ENCODE measurements at regions of chr21 and their contacts with region 1.

Region 1: DNA sequence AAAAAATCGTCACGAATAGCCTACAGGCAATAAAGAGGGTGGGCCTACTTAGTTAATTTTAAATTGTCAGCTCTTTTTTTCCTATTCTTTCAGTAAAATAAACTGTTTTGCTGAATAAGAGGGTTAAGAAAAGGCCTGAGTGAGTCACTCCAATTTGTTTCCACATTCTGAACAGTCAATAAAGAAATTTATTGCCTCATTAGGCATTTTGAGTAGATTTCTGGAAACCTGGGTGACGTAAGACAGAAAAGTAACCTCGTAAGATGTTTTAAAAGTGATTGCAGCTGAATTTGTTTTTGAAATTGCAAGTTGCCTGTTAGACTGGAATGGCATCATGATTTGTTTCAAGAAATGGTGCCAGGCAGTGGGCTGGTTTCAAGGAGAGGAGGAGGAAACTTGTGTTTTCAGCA is 439.3 kb downstream of the USP25 start:
- DNase-seq: no peak
- ATAC-seq: no peak
- H3K4me3 ChIP-seq: no peak overlapping the region
- H3K27ac ChIP-seq: peak overlapping the region in 1 of 2 experiments; percentile 24; a peak in 1 of 6 replicates
- H3K4me1 ChIP-seq: peaks cover 18% of the 10 kb centered on the region
- CTCF ChIP-seq: no peak
- EP300 ChIP-seq: no peak
- POLR2A ChIP-seq: no peak
- RAD21 ChIP-seq: no peak

Region 2: GRCh38 chr21:16193496-16194094 is 24.5 kb after region 1 on chr21:
- CTCF ChIA-PET with region 1: no interaction called
- POLR2A ChIA-PET with region 1: interaction called, 11 read pairs
- DNase-seq: no peak
- ATAC-seq: peak in 1 of 2 experiments; percentile 14; a peak in 1 of 6 replicates
- H3K4me3 ChIP-seq: peak overlapping the region; percentile 51; the same call in 2 of the 3 replicates
- H3K27ac ChIP-seq: peak overlapping the region; percentile 86 to 94
- H3K4me1 ChIP-seq: peaks cover 20% of the 10 kb centered on the region
- CTCF ChIP-seq: no peak
- EP300 ChIP-seq: no peak
- POLR2A ChIP-seq: no peak
- RAD21 ChIP-seq: no peak

Region 3: GRCh38 chr21:16211339-16212303 is 42.5 kb after region 1 on chr21:
- CTCF ChIA-PET with region 1: no interaction called
- POLR2A ChIA-PET with region 1: no interaction called
- DNase-seq: no peak
- ATAC-seq: no peak
- H3K4me3 ChIP-seq: no peak overlapping the region
- H3K27ac ChIP-seq: no peak overlapping the region
- H3K4me1 ChIP-seq: peaks cover 3% of the 10 kb centered on the region; the same call in 1 of the 3 replicates
- CTCF ChIP-seq: no peak
- EP300 ChIP-seq: no peak
- POLR2A ChIP-seq: no peak
- RAD21 ChIP-seq: no peak

Region 4: DNA sequence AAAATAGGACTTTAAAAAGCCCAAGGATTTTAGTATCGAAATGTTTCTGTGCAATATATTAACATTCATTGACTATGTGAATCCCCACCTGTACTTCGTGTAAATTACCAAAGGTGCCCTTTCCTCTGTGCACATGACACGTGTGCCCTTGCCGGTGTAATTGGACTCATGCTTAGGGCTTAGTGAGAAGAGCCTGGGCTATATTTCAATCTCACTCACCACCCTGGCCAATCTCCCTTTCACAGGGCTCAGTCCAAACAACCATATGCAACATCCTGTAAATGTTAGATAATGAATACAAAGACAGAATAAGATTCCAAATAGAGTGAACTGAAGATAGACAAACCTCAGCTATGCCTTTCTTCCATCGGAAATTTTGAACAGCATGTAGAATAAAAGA is 125.0 kb after region 1 on chr21:
- CTCF ChIA-PET with region 1: no interaction called
- POLR2A ChIA-PET with region 1: no interaction called
- DNase-seq: no peak
- ATAC-seq: no peak
- H3K4me3 ChIP-seq: no peak overlapping the region
- H3K27ac ChIP-seq: no peak overlapping the region
- H3K4me1 ChIP-seq: no peaks in the 10 kb centered on the region
- CTCF ChIP-seq: no peak
- EP300 ChIP-seq: no peak
- POLR2A ChIP-seq: no peak
- RAD21 ChIP-seq: no peak

Measured in A549 (cell line).